Psoas muscle (tissue), 8 donors: ENCODE measurements at regions of chrX and their contacts with region 1.

Region 1: DNA sequence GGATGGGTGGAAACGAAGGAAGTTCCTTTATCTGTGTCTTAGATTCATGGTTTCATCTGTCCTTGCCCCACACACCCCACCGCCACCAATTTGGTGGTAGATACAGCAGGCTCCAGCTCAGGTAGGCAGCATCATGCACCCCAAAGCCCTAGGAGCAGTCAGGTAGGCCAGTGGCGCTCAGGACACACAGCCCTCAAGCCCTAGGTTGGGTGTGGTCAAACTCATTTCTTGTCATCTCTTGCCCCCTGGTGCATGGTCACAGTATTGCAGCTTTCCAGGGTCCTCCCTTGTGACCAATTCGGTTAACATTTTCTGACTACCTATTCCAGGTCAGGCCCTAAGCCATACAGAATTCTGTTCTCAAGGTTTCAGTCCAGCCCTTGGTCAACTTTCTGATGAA is 14.5 kb upstream of the PRRG3 start:
- DNase-seq: no peak
- ATAC-seq: peak; percentile 46 to 73 (median 56)
- H3K4me3 ChIP-seq: no peak overlapping the region
- H3K27ac ChIP-seq: no peak overlapping the region
- H3K4me1 ChIP-seq: no peaks in the 10 kb centered on the region
- H3K27me3 ChIP-seq: peaks cover 0 to 9% (median 0%) of the 10 kb centered on the region in 3 donors
- CTCF ChIP-seq: peak; percentile 61

Region 2: GRCh38 chrX:151151665-151152267 is 529.0 kb before region 1 on chrX:
- intact Hi-C with region 1: loop called (anchors 2 to 5 kb)
- DNase-seq: no peak
- ATAC-seq: peak in 2 of 4 donors; percentile 46 to 69
- H3K4me3 ChIP-seq: no peak overlapping the region
- H3K27ac ChIP-seq: no peak overlapping the region
- H3K4me1 ChIP-seq: no peaks in the 10 kb centered on the region
- H3K27me3 ChIP-seq: peaks cover 0 to 11% (median 0%) of the 10 kb centered on the region in 3 donors
- CTCF ChIP-seq: peak; percentile 76

Region 3: DNA sequence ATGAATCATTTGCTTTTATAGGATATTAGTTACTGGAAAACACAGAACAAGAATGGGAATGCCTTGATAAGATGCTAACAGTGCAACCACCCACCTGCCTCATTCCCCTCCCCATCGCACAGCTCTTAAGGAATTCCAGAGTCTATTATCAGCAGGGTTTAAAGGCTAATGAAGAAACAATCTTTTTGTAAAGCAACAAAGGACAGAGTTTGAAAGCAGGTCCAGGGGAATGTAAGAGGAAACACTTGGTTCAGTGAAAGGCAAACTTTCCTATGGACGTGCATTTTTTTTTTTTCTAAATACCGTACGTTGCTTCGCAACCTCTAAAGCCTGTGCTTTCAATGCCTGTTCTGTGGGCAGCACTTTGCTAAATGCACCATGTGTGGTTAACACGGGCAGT is 412.0 kb before region 1 on chrX:
- intact Hi-C with region 1: no loop called
- DNase-seq: no peak
- ATAC-seq: no peak
- H3K4me3 ChIP-seq: no peak overlapping the region
- H3K27ac ChIP-seq: no peak overlapping the region
- H3K4me1 ChIP-seq: no peaks in the 10 kb centered on the region
- H3K27me3 ChIP-seq: no peaks in the 10 kb centered on the region
- CTCF ChIP-seq: no peak

Region 4: GRCh38 chrX:151505796-151506195 is 175.0 kb before region 1 on chrX:
- intact Hi-C with region 1: loop called in 1 of 2 experiments (anchors 10 kb)
- DNase-seq: no peak
- ATAC-seq: no peak
- H3K4me3 ChIP-seq: no peak overlapping the region
- H3K27ac ChIP-seq: no peak overlapping the region
- H3K4me1 ChIP-seq: no peaks in the 10 kb centered on the region
- H3K27me3 ChIP-seq: peaks cover 0 to 11% (median 0%) of the 10 kb centered on the region in 3 donors
- CTCF ChIP-seq: peak; percentile 35

Region 5: GRCh38 chrX:151563449-151563848 is 117.4 kb before region 1 on chrX and contains the start of gene PASD1:
- intact Hi-C with region 1: no loop called
- DNase-seq: no peak
- ATAC-seq: no peak
- H3K4me3 ChIP-seq: no peak within 1 kb of the TSS
- H3K27ac ChIP-seq: no peak within 1 kb of the TSS
- H3K4me1 ChIP-seq: no peaks in the 10 kb centered on the region
- H3K27me3 ChIP-seq: no peaks in the 10 kb centered on the region
- CTCF ChIP-seq: no peak
- total RNA-seq, gene PASD1: not detected

Region 6: GRCh38 chrX:151609222-151609621 is 71.6 kb before region 1 on chrX:
- intact Hi-C with region 1: no loop called
- DNase-seq: no peak
- ATAC-seq: no peak
- H3K4me3 ChIP-seq: no peak overlapping the region
- H3K27ac ChIP-seq: no peak overlapping the region
- H3K4me1 ChIP-seq: no peaks in the 10 kb centered on the region
- H3K27me3 ChIP-seq: peaks cover 0 to 4% (median 0%) of the 10 kb centered on the region in 3 donors
- CTCF ChIP-seq: no peak